Calu3 (cell line): ENCODE measurements at regions of chr7 and their contacts with region 1.

Region 1: GRCh38 chr7:154684666-154685563 is 318.0 kb downstream of the PAXIP1 start:
- DNase-seq: no peak
- H3K4me3 Mint-ChIP-seq: no peak overlapping the region
- H3K27ac Mint-ChIP-seq: no peak overlapping the region
- H3K4me1 Mint-ChIP-seq: no peaks in the 10 kb centered on the region
- H3K27me3 Mint-ChIP-seq: no peaks in the 10 kb centered on the region
- CTCF ChIP-seq: no peak

Region 2: DNA sequence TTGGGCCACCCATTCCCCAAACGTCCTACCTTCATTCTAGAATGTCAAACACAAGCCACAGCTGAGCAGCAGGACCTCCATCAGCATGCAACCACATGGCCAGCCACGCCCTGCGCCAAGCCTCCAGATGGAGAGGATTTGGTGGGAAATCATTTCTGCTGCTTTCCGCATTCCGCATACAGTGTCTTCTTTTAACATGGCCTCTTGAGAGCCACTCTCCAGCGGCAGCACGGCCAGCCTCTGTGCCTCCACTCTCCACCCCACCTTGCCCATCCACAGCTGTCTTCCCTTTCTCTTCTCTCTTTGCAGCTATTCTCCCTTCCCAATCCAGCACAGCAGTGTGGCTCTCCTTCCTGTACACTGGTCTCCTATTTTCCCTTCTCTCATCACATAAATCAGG is 71.1 kb before region 1 on chr7:
- CTCF ChIA-PET with region 1: no interaction called
- intact Hi-C with region 1: loop called (anchors 2 kb)
- DNase-seq: no peak
- H3K4me3 Mint-ChIP-seq: no peak overlapping the region
- H3K27ac Mint-ChIP-seq: no peak overlapping the region
- H3K4me1 Mint-ChIP-seq: no peaks in the 10 kb centered on the region
- H3K27me3 Mint-ChIP-seq: no peaks in the 10 kb centered on the region
- CTCF ChIP-seq: no peak